Caco-2 (cell line): ENCODE measurements at regions of chr20 and their contacts with region 1.

Region 1: DNA sequence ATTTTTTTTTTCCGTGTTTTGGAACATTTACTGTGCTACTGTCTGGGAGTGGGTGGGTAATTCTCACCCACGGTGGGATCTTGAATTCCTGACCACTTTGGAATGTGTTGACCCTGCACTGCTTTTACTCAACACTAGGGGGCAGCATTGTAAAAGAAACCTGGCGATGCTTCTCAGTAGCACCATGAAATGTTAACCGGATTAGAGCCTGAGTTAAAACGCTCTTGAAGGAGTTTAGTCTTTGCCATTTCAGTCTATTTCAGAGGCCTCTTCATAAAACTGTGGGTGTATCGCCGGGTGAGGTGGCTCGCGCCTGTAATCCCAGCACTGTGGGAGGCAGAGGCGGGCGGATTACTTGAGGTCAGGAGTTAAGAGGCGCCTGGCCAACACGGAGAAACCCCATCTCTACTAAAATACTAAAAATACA is 114.4 kb upstream of the PRND start:
- DNase-seq: peak; percentile 61 to 74
- H3K4me3 ChIP-seq: no peak overlapping the region
- H3K4me3 Mint-ChIP-seq: no peak overlapping the region
- H3K27ac Mint-ChIP-seq: no peak overlapping the region
- H3K4me1 ChIP-seq: no peaks in the 10 kb centered on the region
- H3K4me1 Mint-ChIP-seq: no peaks in the 10 kb centered on the region
- H3K27me3 ChIP-seq: no peaks in the 10 kb centered on the region; the same call in none of the 2 replicates
- H3K27me3 Mint-ChIP-seq: peaks cover 25% of the 10 kb centered on the region
- CTCF ChIP-seq: peak; percentile 85 to 93

Region 2: GRCh38 chr20:4720041-4720976 is 113.0 kb after region 1 on chr20:
- CTCF ChIA-PET with region 1: interaction called, 13 read pairs
- POLR2A ChIA-PET with region 1: no interaction called
- intact Hi-C with region 1: loop called (anchors 1 kb)
- DNase-seq: peak; percentile 63 to 73
- H3K4me3 ChIP-seq: no peak overlapping the region
- H3K4me3 Mint-ChIP-seq: peak overlapping the region; percentile 42
- H3K27ac Mint-ChIP-seq: no peak overlapping the region
- H3K4me1 ChIP-seq: peaks cover 4% of the 10 kb centered on the region; the same call in 1 of the 2 replicates
- H3K4me1 Mint-ChIP-seq: peaks cover 6% of the 10 kb centered on the region
- H3K27me3 ChIP-seq: no peaks in the 10 kb centered on the region; the same call in 1 of the 2 replicates
- H3K27me3 Mint-ChIP-seq: no peaks in the 10 kb centered on the region
- CTCF ChIP-seq: peak; percentile 85

Region 3: DNA sequence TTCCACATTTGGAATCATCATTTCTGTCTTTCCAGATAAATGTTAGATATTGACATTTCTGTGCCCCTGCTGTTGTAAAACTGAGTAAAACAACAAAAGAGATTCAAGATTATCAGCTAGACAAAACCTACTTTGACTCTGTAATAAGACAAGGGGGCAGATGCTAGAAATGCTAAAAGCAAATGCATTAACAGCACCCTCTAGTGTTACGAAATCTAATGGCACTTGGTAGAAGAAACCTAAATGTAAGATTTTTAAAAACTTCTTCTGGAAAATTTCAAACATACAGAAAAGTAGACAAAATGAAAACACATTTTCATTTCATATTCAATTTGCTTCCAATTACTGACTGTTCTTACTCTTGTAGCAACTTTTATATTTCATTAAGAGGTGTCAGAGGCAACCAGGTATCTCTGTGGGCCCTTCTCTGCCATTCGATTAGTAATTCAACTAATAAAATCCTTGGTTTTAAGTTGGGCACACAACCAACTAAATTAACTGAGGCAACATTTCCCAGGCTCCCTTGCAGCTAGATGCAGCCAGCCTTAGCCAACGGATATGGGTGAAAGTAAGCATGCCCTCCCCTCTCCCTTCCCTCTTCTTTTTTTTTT is 349.0 kb after region 1 on chr20:
- CTCF ChIA-PET with region 1: no interaction called
- POLR2A ChIA-PET with region 1: no interaction called
- intact Hi-C with region 1: loop called (anchors 1 kb)
- DNase-seq: peak in 1 of 2 experiments; percentile 58
- H3K4me3 ChIP-seq: no peak overlapping the region
- H3K4me3 Mint-ChIP-seq: no peak overlapping the region
- H3K27ac Mint-ChIP-seq: no peak overlapping the region
- H3K4me1 ChIP-seq: peaks cover under 1% of the 10 kb centered on the region
- H3K4me1 Mint-ChIP-seq: no peaks in the 10 kb centered on the region
- H3K27me3 ChIP-seq: no peaks in the 10 kb centered on the region
- H3K27me3 Mint-ChIP-seq: no peaks in the 10 kb centered on the region
- CTCF ChIP-seq: peak; percentile 76 to 88

Region 4: GRCh38 chr20:5191829-5192569 is 584.7 kb after region 1 on chr20:
- CTCF ChIA-PET with region 1: no interaction called
- POLR2A ChIA-PET with region 1: no interaction called
- intact Hi-C with region 1: loop called (anchors 10 kb)
- DNase-seq: peak in 1 of 2 experiments; percentile 61
- H3K4me3 ChIP-seq: no peak overlapping the region
- H3K4me3 Mint-ChIP-seq: no peak overlapping the region
- H3K27ac Mint-ChIP-seq: no peak overlapping the region
- H3K4me1 ChIP-seq: no peaks in the 10 kb centered on the region
- H3K4me1 Mint-ChIP-seq: no peaks in the 10 kb centered on the region
- H3K27me3 ChIP-seq: no peaks in the 10 kb centered on the region
- H3K27me3 Mint-ChIP-seq: no peaks in the 10 kb centered on the region
- CTCF ChIP-seq: peak; percentile 80 to 81